ENCODE measurements at regions of chr14 and their contacts with region 1.

Region 1: GRCh38 chr14:67943947-67944346 is 124.4 kb downstream of the RAD51B start:
- DNase-seq: peak; percentile 38
- CTCF ChIP-seq: peak; percentile 72

Region 2: GRCh38 chr14:68834816-68835215 is 890.9 kb after region 1 on chr14:
- in situ Hi-C with region 1: loop called (anchors 10 kb)
- DNase-seq: no peak
- CTCF ChIP-seq: no peak